ENCODE measurements at regions of chr4 and their contacts with region 1.

Region 1: GRCh38 chr4:122577808-122578781 is 42.8 kb downstream of the IL21 start:
- DNase-seq: peak; percentile 92
- H3K4me3 Mint-ChIP-seq: peak overlapping the region; percentile 75
- H3K27ac Mint-ChIP-seq: peak overlapping the region; percentile 89
- H3K4me1 Mint-ChIP-seq: peaks cover 47% of the 10 kb centered on the region
- H3K27me3 Mint-ChIP-seq: no peaks in the 10 kb centered on the region

Region 2: DNA sequence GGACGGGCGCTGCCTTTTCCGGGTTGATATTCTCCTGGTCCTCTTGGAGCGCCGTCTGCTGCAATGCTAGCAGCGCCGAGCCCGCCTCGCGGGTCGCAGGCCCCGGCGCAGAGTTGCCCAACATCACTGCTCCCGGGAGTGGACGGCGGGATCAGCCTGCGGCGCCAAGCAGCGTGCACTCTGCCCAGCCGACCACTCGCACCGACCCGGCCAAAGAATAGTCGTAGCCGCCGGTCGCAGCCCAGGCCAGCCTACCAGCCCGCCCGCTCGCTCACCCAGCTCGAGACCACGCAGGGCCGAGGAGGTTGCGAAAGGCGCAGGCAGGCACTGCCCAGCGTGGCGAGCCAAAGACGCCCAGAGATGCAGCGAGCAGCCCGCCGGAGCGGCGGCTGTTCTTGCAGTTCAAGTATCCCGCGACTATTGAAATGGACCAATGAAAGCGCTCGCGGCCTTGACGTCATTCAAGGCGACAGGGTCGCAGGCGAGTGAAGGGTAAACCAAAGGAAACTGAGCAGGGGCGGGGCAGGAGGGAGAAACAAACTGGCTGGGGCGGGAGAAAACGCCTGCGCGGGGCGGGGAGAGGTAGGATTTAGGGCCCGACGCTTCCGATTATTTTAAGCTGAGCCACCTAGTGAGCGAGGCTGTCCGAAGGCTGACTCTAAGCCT is 754.5 kb before region 1 on chr4 and contains the start of gene CCNA2:
- intact Hi-C with region 1: loop called (anchors 5 kb)
- DNase-seq: peak; percentile 99
- H3K4me3 Mint-ChIP-seq: peak within 1 kb of the TSS; percentile 98
- H3K27ac Mint-ChIP-seq: peak within 1 kb of the TSS; percentile 97
- H3K4me1 Mint-ChIP-seq: peaks cover 31% of the 10 kb centered on the region
- H3K27me3 Mint-ChIP-seq: no peaks in the 10 kb centered on the region
- total RNA-seq, gene CCNA2: 72.0 and 73.4 TPM in 2 replicates

Region 3: GRCh38 chr4:121950212-121950679 is 627.8 kb before region 1 on chr4:
- intact Hi-C with region 1: loop called (anchors 1 kb)
- DNase-seq: peak; percentile 95
- H3K4me3 Mint-ChIP-seq: peak overlapping the region; percentile 92
- H3K27ac Mint-ChIP-seq: peak overlapping the region; percentile 48
- H3K4me1 Mint-ChIP-seq: peaks cover 14% of the 10 kb centered on the region
- H3K27me3 Mint-ChIP-seq: peaks cover 64% of the 10 kb centered on the region

Region 4: DNA sequence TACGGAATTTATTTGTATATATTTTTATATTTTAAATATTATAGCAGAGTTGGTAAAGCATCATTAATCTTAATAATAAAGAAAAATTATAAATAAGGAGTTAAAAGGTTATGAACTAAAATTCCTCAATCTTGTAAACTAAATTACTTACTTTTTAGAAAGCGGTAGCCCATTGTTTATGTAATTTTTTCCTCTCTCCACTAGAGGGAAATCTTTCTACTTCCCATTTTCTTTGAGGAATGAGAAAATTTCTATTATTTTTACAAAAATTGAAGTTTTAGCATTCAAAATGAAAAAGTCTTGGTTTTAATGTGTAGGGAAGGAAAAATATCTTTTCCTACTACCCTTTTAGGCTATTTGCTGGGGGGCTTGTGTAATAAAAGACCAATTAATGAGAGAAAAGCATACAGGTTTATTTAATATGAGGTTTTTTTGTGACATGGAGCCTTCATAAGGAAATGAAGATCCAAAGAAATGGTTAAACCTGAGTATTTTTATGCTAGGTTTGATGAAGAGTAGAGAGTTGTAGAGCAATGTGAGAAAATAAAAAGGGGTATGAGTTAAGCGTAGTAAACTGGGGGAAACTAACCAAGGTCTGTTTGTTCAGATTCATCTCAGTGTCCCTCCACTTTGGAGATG is 268.0 kb before region 1 on chr4:
- intact Hi-C with region 1: loop called (anchors 1 kb)
- DNase-seq: no peak
- H3K4me3 Mint-ChIP-seq: no peak overlapping the region
- H3K27ac Mint-ChIP-seq: no peak overlapping the region
- H3K4me1 Mint-ChIP-seq: peaks cover 8% of the 10 kb centered on the region
- H3K27me3 Mint-ChIP-seq: no peaks in the 10 kb centered on the region

Region 5: DNA sequence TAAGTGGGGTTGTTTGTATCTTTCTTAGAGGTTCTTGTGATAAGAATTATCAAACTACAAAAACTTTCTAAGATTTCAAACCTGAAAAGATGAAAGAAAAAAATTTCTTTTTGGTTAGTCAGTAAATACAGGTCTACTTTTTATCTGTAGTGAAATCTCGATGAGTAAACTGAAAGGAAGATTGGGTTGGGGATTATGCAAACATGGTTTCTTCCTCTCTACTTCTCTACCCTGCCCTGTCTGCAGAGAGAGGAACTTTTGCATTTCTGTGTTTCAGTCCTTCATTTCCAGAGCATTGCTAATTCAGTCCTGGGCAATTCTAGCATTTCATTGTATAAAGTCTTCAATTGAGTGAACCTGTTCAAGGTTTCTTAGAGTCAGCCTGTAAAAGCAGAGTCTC is 70.0 kb before region 1 on chr4:
- intact Hi-C with region 1: loop called (anchors 1 kb)
- DNase-seq: peak; percentile 70
- H3K4me3 Mint-ChIP-seq: peak overlapping the region; percentile 65
- H3K27ac Mint-ChIP-seq: peak overlapping the region; percentile 82
- H3K4me1 Mint-ChIP-seq: peaks cover 55% of the 10 kb centered on the region
- H3K27me3 Mint-ChIP-seq: no peaks in the 10 kb centered on the region

Region 6: GRCh38 chr4:122552898-122553297 is 25.2 kb before region 1 on chr4:
- intact Hi-C with region 1: loop called (anchors 1 kb)
- DNase-seq: no peak
- H3K4me3 Mint-ChIP-seq: peak overlapping the region; percentile 14
- H3K27ac Mint-ChIP-seq: peak overlapping the region; percentile 78
- H3K4me1 Mint-ChIP-seq: peaks cover 59% of the 10 kb centered on the region
- H3K27me3 Mint-ChIP-seq: no peaks in the 10 kb centered on the region

Region 7: DNA sequence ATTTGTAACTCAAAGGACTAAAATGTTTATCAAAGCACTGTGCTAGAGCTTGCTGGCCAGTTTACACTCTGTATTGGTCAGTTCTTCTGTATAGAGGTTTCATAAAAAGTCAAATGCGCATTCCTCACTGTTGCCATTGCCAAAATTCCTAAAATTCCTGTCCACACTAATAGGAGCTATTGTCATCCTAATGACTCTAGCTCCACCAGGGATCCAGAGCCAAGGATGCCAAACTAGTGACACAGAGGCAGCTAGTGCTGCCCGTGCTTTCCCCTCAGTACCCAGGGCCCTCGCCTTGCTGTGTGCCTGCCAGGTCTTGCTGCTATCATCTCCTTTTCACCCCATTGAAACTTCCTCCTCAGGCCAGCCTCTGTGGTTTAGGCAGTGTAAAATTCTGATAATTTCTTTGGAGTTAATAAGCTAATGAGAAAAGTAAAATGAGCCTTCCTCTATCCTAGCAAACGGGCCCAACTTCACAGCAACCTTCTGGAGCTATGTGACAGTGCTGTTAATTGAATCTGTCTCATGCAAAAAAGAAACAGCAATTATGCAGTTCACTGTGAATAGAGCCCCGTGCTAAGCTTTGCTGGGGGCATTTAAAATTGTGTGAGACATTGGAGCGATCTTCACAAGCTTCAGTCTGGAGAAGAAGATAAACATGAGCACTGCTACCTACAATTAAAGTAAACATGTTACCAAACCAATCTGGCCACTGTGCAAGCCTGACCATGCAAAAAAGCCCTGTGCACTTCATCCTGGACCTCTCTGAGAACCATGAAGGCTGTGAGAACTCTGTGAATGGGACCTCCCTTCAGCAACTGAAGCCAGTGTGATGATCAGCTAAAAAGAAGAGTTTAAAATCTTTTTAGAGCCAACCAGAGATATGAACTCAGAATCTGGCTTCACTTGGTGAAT is 205.5 kb after region 1 on chr4:
- intact Hi-C with region 1: loop called (anchors 1 kb)
- DNase-seq: peak; percentile 52
- H3K4me3 Mint-ChIP-seq: no peak overlapping the region
- H3K27ac Mint-ChIP-seq: no peak overlapping the region
- H3K4me1 Mint-ChIP-seq: peaks cover 23% of the 10 kb centered on the region
- H3K27me3 Mint-ChIP-seq: no peaks in the 10 kb centered on the region